ENCODE measurements at regions of chr12 and their contacts with region 1.

Region 1: DNA sequence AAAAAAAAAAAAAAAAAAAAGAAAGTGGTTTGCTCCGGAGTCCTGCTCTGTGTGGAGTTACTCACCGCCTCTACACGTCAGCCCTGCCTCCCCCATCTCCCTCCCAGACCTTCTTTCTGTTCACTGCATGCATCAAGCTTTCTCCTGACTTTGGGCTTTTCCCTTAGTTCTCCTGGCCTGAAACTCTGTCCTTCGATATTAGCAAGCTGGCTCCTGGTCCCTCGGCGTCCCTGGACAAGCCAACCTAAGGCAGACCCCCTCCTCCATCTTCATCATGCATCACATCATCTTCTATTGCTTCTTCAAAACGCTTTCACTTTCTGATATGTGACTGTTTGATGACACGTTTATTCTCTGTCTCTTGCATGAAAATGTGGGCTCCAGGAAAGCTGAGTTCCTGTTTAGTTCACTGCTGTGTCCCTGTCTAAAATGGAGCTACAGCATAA is 40.6 kb downstream of the SLC15A4 start:
- DNase-seq: no peak
- ATAC-seq: no peak
- H3K4me3 ChIP-seq: no peak overlapping the region
- H3K27ac ChIP-seq: no peak overlapping the region
- H3K4me1 ChIP-seq: peaks cover 0 to 5% of the 10 kb centered on the region in 2 experiments; a peak in 2 of 4 replicates
- H3K27me3 ChIP-seq: no peaks in the 10 kb centered on the region
- CTCF ChIP-seq: no peak
- POLR2A ChIP-seq: no peak
- RAD21 ChIP-seq: no peak

Region 2: GRCh38 chr12:128305336-128305892 is 477.7 kb before region 1 on chr12:
- CTCF ChIA-PET with region 1: no interaction called
- POLR2A ChIA-PET with region 1: no interaction called
- RAD21 ChIA-PET with region 1: no interaction called
- intact Hi-C with region 1: no loop called
- DNase-seq: no peak
- ATAC-seq: no peak
- H3K4me3 ChIP-seq: no peak overlapping the region
- H3K27ac ChIP-seq: no peak overlapping the region
- H3K4me1 ChIP-seq: no peaks in the 10 kb centered on the region
- H3K27me3 ChIP-seq: no peaks in the 10 kb centered on the region
- CTCF ChIP-seq: no peak
- POLR2A ChIP-seq: no peak
- RAD21 ChIP-seq: no peak

Region 3: GRCh38 chr12:128823916-128824839 is 41.0 kb after region 1 on chr12 and contains the start of gene SLC15A4:
- CTCF ChIA-PET with region 1: no interaction called
- POLR2A ChIA-PET with region 1: no interaction called
- RAD21 ChIA-PET with region 1: no interaction called
- intact Hi-C with region 1: loop called (anchors 5 kb)
- DNase-seq: peak; percentile 80
- ATAC-seq: peak; percentile 92
- H3K4me3 ChIP-seq: peak within 1 kb of the TSS; percentile 90 to 94
- H3K27ac ChIP-seq: peak within 1 kb of the TSS; percentile 95
- H3K4me1 ChIP-seq: peaks cover 0 to 11% of the 10 kb centered on the region in 2 experiments; a peak in 2 of 4 replicates
- H3K27me3 ChIP-seq: no peaks in the 10 kb centered on the region
- CTCF ChIP-seq: peak in 1 of 3 experiments; percentile 20; a peak in 2 of 6 replicates
- POLR2A ChIP-seq: peak; percentile 70
- RAD21 ChIP-seq: no peak
- total RNA-seq, gene SLC15A4: 20.6 TPM

Region 4: DNA sequence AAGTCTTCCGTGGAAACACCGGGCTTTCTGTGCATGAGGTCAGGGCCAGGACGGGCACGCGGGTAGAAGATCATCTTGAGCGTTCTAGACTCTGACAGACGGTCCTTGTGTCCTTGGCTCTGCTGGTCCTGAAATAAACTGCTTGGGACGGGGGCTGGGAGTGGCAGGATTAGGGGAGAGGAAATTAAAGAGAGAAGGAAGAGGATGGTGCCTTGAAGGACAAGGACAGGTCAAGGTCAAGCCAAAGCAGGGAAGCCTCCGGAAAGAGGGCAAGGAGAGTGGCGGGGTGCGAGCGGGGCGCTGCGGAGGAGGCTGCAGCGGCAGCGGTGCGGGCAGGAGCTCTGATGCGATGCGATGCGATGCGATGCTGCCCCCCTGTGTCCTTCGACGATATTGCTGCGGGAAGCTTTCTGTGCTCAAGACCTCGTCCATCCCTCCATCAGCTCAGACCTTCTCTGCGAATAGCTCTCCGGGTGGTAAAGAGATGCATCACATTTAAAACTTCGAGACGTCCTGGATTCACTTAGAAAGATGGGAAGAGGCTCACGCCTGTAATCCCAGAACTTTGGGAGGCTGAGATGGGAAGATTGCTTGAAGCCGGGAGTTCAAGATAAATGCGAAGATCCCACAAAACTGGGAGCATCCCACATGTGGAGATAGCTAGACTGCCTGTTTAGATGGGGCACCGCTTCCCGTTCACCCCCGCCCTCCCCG is 1230.8 kb after region 1 on chr12:
- CTCF ChIA-PET with region 1: no interaction called
- POLR2A ChIA-PET with region 1: no interaction called
- RAD21 ChIA-PET with region 1: no interaction called
- intact Hi-C with region 1: loop called (anchors 5 kb)
- DNase-seq: no peak
- ATAC-seq: peak; percentile 59
- H3K4me3 ChIP-seq: no peak overlapping the region
- H3K27ac ChIP-seq: no peak overlapping the region
- H3K4me1 ChIP-seq: no peaks in the 10 kb centered on the region
- H3K27me3 ChIP-seq: no peaks in the 10 kb centered on the region
- CTCF ChIP-seq: peak in 2 of 3 experiments; percentile 28 to 48; a peak in 4 of 6 replicates
- POLR2A ChIP-seq: no peak
- RAD21 ChIP-seq: peak; percentile 23